Cardiac septum (tissue), 1 donor: ENCODE measurements at regions of chr9 and their contacts with region 1.

Region 1: GRCh38 chr9:125407974-125408900 is 146.6 kb downstream of the GAPVD1 start:
- DNase-seq: peak; percentile 87

Region 2: DNA sequence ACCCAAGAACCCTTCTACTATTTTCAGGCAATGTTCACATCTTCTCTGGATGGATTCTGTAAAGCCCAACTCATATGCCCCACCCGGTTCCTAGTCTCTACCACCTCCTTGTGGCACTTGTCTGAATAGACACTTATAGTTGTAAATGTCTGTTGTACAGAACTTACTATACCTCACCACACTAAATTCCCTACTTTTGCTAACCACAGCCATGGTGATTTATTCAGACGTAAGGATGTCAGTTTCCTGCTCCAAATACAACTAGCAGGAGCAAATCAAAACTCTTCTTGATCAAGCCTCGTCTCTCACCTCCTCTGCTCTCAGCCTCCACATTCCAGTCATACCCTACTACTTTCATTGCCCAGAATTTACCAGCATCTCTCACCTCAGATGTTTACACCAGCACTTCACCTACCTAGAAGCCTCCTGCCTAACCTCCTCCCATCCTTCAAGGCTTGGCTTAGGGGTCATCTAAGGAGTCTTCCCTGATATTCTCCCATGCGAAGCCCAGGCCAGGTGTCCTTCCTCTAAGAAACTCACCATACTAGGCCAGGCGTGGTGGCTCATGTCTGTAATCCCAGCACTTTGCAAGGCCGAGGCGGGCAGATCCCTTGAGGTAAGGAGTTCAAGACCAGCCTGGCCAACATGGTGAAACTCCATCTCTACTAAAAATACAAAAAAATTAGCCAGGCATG is 223.3 kb after region 1 on chr9:
- intact Hi-C with region 1: loop called (anchors 5 kb)
- DNase-seq: no peak

Region 3: DNA sequence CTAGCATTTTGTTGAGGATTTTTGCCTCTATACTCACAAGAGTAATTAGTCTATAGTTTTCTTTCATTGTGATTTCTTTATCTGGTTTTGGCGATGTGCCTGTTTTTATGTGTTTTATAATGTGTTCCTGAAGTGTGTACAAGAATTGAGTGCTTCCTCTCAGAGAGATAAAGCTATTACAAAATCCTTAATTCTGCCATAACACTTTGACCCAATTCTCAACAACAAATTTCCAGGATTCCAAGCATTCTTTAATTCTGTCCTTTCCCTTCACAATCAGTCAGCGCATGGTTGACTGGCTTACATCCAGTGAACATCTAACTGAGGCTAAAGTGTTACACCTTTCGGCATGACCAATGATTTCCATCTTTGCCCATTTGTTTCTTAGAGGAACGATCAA is 635.4 kb after region 1 on chr9:
- intact Hi-C with region 1: no loop called
- DNase-seq: no peak

Region 4: GRCh38 chr9:126228781-126229444 is 820.7 kb after region 1 on chr9:
- intact Hi-C with region 1: loop called (anchors 2 kb)
- DNase-seq: peak; percentile 83

Region 5: DNA sequence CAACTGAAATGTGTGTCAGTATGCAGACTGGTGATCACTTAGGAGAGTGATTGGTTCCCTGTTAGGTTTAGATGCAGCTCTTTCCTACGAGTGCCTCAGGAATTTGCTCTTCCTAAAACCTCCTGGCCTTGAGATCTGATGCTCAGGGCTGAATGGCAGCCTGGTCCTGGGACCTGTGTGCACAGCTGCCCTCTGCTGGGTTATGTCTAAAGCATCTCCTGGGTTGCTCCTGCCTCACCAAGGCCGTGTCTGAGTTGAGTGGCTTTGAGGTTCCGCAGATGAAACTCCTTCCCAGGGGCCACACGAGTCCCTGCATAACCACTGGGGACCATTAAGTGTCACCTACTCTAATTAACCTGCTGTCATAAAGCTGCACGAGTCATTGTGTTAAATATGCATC is 977.9 kb after region 1 on chr9:
- intact Hi-C with region 1: loop called (anchors 5 kb)
- DNase-seq: no peak